Activated T-helper 1 cell treated with anti-CD3 and anti-CD28 coated beads, Interleukin-12 subunit alpha, Interleukin-12 subunit beta, Interleukin-2, Interleukin-4 antibody, amounts not matched to agents 30 ng/mL and 10 ng/mL and 1 ng/mL, durations not matched to agents 14 hours and 24 hours and 36 hours (primary cell): ENCODE measurements at regions of chr2 and their contacts with region 1.

Region 1: GRCh38 chr2:200864176-200864976 is at the start of gene CLK1:
- DNase-seq: peak; percentile 92
- H3K4me3 Mint-ChIP-seq: peak within 1 kb of the TSS; percentile 93
- H3K27ac Mint-ChIP-seq: peak within 1 kb of the TSS; percentile 97
- H3K4me1 Mint-ChIP-seq: peaks cover 50% of the 10 kb centered on the region
- H3K27me3 Mint-ChIP-seq: no peaks in the 10 kb centered on the region
- total RNA-seq, gene CLK1: 91.7 and 99.5 TPM in 2 replicates

Region 2: DNA sequence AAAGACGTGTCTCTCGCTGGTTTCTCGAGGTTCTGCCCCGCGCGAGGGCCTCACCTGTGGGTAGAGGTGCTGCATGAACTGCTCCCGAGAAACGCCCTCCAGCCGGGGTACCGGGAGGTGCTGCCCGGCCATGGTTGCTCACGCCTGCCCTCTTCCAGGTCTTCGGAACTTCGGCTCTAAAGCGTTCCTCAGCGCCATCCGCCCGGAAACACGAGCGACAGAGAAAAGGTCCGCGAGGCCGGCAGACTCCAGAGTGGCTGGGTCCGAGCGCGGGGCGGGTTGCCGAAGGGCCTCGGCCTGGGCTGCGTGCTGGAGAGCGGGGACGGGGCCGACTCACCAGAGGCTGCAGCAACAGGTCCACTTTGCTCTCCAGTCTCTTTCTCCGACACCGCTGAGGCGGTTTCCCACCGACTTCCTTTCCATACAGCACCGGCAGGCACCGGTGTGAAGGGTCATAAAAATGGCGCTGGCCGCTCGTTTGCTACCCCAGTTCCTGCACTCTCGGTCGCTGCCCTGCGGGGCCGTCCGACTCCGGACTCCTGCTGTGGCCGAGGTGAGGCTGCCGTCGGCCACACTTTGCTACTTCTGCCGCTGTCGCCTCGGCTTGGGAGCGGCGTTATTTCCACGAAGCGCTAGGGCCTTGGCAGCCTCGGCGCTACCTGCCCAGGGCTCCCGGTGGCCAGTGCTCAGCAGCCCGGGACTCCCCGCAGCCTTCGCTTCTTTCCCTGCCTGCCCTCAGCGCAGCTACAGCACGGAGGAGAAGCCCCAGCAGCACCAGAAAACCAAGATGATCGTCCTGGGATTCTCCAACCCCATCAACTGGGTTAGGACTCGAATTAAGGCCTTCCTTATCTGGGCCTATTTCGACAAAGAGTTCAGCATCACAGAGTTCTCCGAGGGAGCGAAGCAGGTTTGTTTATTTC is 908.8 kb before region 1 on chr2 and contains the starts of genes MAIP1 and TYW5:
- intact Hi-C with region 1: loop called (anchors 5 kb)
- DNase-seq: peak; percentile 73
- H3K4me3 Mint-ChIP-seq: peak within 1 kb of the TSS; percentile 99
- H3K27ac Mint-ChIP-seq: peak within 1 kb of the TSS; percentile 93
- H3K4me1 Mint-ChIP-seq: peaks cover 62% of the 10 kb centered on the region
- H3K27me3 Mint-ChIP-seq: no peaks in the 10 kb centered on the region
- total RNA-seq, gene MAIP1: 24.7 and 27.1 TPM in 2 replicates
- total RNA-seq, gene TYW5: 11.7 and 13.9 TPM in 2 replicates

Region 3: DNA sequence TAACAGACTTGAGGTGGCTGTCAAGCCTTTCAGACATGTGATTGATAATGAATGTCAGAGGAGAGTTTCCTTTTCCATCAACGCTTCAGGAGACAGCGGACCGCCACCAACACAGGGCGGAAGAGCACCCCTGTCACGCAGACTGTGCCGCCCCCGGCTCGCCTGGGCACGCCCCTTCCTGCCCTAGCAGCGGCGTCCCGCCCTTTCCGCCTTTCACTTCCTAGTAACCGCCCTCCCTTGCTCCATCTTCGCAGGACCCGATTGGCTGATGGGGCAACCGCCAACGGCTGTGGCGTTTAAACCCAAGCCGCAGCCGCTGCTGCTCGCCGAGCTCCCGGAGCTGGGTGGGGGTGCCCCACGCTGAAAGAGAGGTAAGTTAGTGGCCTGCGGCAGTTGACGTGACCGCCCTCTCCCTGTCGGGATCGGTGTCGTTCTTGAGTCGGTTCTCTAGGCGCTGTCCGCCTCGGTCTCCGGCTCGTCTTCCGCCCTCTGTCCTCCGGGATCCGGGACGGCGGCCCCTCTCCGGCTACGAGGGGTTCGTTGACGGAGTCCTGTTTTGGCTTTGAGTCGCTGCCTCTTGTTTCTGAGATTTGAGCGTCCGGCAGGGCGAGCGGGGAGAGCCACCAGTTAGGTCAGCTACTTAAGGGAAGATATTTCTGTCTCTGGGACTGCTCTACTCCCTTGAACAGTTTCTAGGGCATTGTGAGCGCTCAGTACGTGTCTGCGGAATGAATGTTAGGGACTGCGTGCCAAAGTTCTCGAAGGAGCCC is 338.3 kb before region 1 on chr2 and contains the start of gene SGO2:
- intact Hi-C with region 1: loop called (anchors 2 kb)
- DNase-seq: peak; percentile 95
- H3K4me3 Mint-ChIP-seq: peak within 1 kb of the TSS; percentile 94
- H3K27ac Mint-ChIP-seq: peak within 1 kb of the TSS; percentile 89
- H3K4me1 Mint-ChIP-seq: peaks cover 32% of the 10 kb centered on the region
- H3K27me3 Mint-ChIP-seq: no peaks in the 10 kb centered on the region
- total RNA-seq, gene SGO2: 20.5 and 20.9 TPM in 2 replicates

Region 4: GRCh38 chr2:200703127-200703925 is 161.1 kb before region 1 on chr2:
- intact Hi-C with region 1: loop called (anchors 2 kb)
- DNase-seq: peak; percentile 4
- H3K4me3 Mint-ChIP-seq: peak overlapping the region; percentile 35
- H3K27ac Mint-ChIP-seq: peak overlapping the region; percentile 82
- H3K4me1 Mint-ChIP-seq: peaks cover 48% of the 10 kb centered on the region
- H3K27me3 Mint-ChIP-seq: no peaks in the 10 kb centered on the region

Region 5: DNA sequence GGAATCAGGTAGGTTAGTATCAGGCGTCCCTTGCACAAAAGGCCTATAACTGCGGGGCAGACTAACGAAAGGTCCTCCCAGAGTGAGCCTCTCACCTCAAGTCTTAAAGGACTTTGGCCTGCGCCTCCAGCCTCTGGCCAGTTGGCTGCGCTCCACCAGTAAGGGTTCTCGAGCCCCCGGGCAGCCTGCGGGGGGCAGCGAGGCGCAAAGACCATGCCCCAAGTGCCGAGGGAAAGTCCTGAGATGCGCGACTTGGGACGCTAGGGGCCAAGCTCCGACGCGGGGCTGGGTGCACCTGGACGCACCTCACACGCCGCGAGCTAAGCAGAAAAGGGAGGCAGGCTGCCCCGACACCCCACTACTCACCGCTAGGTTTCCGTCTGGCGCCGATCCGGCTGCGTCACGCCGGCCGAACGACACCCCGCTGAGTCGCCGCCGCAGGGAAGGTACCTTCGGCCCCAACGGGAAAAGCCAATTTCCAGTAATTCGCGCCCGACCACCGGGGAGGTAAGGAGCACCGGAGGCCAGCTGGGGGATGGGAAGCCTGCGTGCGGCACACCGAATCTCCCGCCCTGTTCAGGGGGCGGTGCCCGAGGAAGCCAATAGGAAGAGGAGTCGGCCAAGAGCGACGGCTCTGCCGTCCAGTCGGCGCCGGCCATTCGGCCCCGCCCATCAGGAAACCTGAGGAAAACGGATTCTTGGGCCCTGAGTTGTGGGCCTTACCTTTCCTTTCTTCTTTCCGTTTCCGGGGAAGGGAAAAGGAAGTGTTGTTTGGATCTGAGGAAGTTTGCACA is 98.9 kb after region 1 on chr2 and contains the start of gene ORC2:
- intact Hi-C with region 1: loop called (anchors 1 kb)
- DNase-seq: peak; percentile 93
- H3K4me3 Mint-ChIP-seq: peak within 1 kb of the TSS; percentile 97
- H3K27ac Mint-ChIP-seq: peak within 1 kb of the TSS; percentile 93
- H3K4me1 Mint-ChIP-seq: peaks cover 58% of the 10 kb centered on the region
- H3K27me3 Mint-ChIP-seq: no peaks in the 10 kb centered on the region
- total RNA-seq, gene ORC2: 63.1 and 63.3 TPM in 2 replicates

Region 6: DNA sequence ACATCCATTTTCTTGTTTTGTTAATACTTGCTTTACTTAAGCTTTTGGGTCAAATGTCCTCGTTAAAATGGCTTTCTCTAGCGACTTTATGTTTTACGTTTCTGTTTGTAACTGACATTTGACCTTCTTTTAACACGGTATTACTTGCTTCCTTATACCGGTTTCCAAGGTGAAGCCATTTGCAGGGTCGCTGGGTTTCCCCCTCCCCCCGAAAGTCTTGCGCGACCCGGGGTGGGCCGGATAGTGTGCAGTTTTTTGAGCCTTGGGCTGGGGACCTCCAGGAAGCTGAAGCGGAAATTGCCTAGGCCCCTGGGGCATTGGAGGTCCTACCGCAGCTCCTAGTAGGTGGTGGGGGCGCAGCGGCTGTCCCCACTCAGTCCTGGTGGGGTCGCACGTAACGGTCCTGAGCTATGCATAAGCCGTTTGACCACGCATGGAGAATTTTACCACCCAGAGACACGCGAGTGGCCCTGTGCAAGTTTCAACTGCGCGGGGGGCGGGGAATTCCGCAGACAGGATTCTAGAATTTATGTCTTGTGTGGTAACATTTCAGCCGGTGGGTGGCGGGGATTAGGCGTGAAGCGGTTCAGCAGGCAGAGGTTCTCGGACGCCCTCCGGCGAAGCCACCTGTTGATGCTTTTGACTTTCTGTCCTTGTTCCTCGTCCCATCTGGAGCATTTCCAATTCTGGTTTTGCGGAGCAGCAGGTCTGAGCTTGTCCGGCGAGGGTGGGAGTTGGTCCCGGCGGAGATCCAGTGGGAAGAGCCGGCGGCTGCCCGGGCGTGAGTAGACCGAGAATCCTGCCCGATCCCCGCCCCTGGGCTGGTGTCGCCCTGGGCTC is 254.0 kb after region 1 on chr2:
- intact Hi-C with region 1: loop called (anchors 1 kb)
- DNase-seq: peak; percentile 78
- H3K4me3 Mint-ChIP-seq: peak overlapping the region; percentile 94
- H3K27ac Mint-ChIP-seq: peak overlapping the region; percentile 100
- H3K4me1 Mint-ChIP-seq: peaks cover 65% of the 10 kb centered on the region
- H3K27me3 Mint-ChIP-seq: no peaks in the 10 kb centered on the region

Region 7: DNA sequence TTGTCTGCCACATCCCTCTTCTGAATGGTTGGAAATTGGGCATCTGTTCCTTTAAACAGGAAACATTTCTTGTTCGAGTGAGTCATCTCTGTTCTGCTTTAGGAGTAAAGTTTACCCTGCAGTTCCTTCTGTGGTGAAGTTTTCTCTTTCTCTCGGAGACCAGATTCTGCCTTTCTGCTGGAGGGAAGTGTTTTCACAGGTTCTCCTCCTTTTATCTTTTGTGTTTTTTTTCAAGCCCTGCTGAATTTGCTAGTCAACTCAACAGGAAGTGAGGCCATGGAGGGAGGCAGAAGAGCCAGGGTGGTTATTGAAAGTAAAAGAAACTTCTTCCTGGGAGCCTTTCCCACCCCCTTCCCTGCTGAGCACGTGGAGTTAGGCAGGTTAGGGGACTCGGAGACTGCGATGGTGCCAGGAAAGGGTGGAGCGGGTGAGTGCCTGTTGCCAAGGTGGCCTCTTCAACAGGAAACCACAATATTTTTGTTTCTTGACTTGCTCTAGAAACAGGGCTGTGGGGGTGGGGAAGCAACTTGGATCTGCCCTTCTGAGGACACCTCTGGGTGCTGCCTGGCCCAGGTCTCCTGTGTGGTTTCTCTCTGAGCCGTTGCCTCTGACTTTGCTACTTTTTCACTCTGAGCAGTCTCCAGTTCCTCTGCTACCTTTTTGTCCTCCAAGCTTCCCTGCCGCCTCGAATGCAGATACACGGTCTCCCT is 393.7 kb after region 1 on chr2:
- intact Hi-C with region 1: loop called (anchors 1 kb)
- DNase-seq: peak; percentile 93
- H3K4me3 Mint-ChIP-seq: peak overlapping the region; percentile 91
- H3K27ac Mint-ChIP-seq: peak overlapping the region; percentile 100
- H3K4me1 Mint-ChIP-seq: peaks cover 84% of the 10 kb centered on the region
- H3K27me3 Mint-ChIP-seq: no peaks in the 10 kb centered on the region